T-cell (primary cell): ENCODE measurements at regions of chr17 and their contacts with region 1.

Region 1: GRCh38 chr17:75667021-75667790 is at the starts of genes RECQL5 and SAP30BP:
- DNase-seq: peak; percentile 90 to 99 (median 97)
- ATAC-seq: peak; percentile 100
- H3K4me3 ChIP-seq: peak within 1 kb of the TSS; percentile 95 to 99
- H3K4me3 Mint-ChIP-seq: peak within 1 kb of the TSS in 2 of 3 donors; percentile 54 to 63
- H3K27ac ChIP-seq: peak within 1 kb of the TSS; percentile 88
- H3K27ac Mint-ChIP-seq: no peak within 1 kb of the TSS
- H3K4me1 ChIP-seq: peaks cover 14 to 19% of the 10 kb centered on the region in 2 experiments
- H3K4me1 Mint-ChIP-seq: peaks cover 21 to 24% (median 23%) of the 10 kb centered on the region in 3 donors
- H3K27me3 ChIP-seq: no peaks in the 10 kb centered on the region
- H3K27me3 Mint-ChIP-seq: no peaks in the 10 kb centered on the region
- total RNA-seq, gene RECQL5: 38.0 to 75.0 (median 61.9) TPM
- total RNA-seq, gene SAP30BP: 124 to 191 (median 128) TPM

Region 2: GRCh38 chr17:75689441-75689873 is 22.3 kb after region 1 on chr17:
- CTCF ChIA-PET with region 1: interaction called in 1 of 2 experiments, 3 read pairs
- POLR2A ChIA-PET with region 1: interaction called in 1 of 2 experiments, 14 read pairs
- DNase-seq: peak; percentile 13 to 77 (median 59)
- ATAC-seq: peak; percentile 91 to 97 (median 96)
- H3K4me3 ChIP-seq: no peak overlapping the region
- H3K4me3 Mint-ChIP-seq: peak overlapping the region in 2 of 3 donors; percentile 39 to 78
- H3K27ac ChIP-seq: peak overlapping the region; percentile 70
- H3K27ac Mint-ChIP-seq: peak overlapping the region; percentile 87 to 89
- H3K4me1 ChIP-seq: peaks cover 32 to 47% of the 10 kb centered on the region in 2 experiments
- H3K4me1 Mint-ChIP-seq: peaks cover 55 to 61% (median 56%) of the 10 kb centered on the region in 3 donors
- H3K27me3 ChIP-seq: no peaks in the 10 kb centered on the region
- H3K27me3 Mint-ChIP-seq: no peaks in the 10 kb centered on the region

Region 3: GRCh38 chr17:76307299-76307965 is 640.2 kb after region 1 on chr17:
- CTCF ChIA-PET with region 1: no interaction called
- POLR2A ChIA-PET with region 1: interaction called in 1 of 2 experiments, 12 read pairs
- DNase-seq: no peak
- ATAC-seq: no peak
- H3K4me3 ChIP-seq: no peak overlapping the region
- H3K4me3 Mint-ChIP-seq: no peak overlapping the region
- H3K27ac ChIP-seq: no peak overlapping the region
- H3K27ac Mint-ChIP-seq: no peak overlapping the region
- H3K4me1 ChIP-seq: no peaks in the 10 kb centered on the region
- H3K4me1 Mint-ChIP-seq: peaks cover 0 to 1% (median 0%) of the 10 kb centered on the region in 3 donors
- H3K27me3 ChIP-seq: no peaks in the 10 kb centered on the region
- H3K27me3 Mint-ChIP-seq: no peaks in the 10 kb centered on the region